ENCODE measurements at regions of chr18 and their contacts with region 1.

Region 1: DNA sequence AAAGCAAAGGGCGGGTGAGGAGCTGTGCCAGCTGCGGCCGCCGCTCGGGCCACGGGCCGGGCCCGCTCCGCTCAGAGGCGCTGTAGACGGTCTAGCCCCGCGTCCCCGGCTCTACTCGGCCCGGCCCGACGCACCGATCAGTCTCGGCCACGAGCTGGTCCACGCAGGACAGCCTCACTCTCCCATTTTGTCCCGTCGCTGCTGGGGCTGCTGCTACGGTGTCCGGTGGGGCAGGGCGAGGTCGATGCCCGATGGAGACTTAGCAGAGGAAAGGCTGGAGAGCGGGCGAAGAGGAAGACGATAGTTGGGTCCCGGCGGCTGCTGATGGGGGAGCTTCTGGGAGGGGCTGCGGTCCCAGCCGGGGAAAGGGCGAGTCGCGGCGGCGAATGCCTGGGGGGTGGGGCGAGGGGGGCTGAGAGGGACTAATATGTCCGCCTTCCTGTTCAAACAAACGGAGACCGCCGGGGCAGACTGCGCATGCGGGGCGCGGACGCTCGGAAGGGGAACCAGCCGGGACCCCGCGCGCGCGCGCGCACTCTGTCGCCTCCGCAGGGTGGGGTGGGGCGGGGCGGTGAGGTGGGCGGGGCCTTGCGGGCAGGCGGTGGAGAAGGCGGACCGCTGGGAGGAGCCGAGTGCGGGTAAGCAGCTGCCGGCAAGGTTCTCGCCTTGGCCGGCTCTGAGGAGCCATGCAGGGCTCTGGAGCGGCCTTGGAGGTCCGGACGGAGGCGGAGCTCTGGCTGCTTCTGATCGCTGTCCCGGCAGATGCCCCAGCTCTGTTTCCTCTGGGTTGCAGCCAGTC is at the start of gene ROCK1:
- H3K4me3 Mint-ChIP-seq: peak within 1 kb of the TSS; percentile 99
- H3K27ac Mint-ChIP-seq: peak within 1 kb of the TSS; percentile 100
- H3K4me1 Mint-ChIP-seq: peaks cover 7% of the 10 kb centered on the region
- H3K27me3 Mint-ChIP-seq: no peaks in the 10 kb centered on the region

Region 2: GRCh38 chr18:21069468-21069867 is 42.1 kb before region 1 on chr18:
- intact Hi-C with region 1: loop called (anchors 5 kb)
- H3K4me3 Mint-ChIP-seq: no peak overlapping the region
- H3K27ac Mint-ChIP-seq: no peak overlapping the region
- H3K4me1 Mint-ChIP-seq: peaks cover 31% of the 10 kb centered on the region
- H3K27me3 Mint-ChIP-seq: no peaks in the 10 kb centered on the region

Region 3: GRCh38 chr18:21163647-21164547 is 52.4 kb after region 1 on chr18:
- intact Hi-C with region 1: loop called (anchors 5 kb)
- H3K4me3 Mint-ChIP-seq: peak overlapping the region; percentile 48
- H3K27ac Mint-ChIP-seq: peak overlapping the region; percentile 91
- H3K4me1 Mint-ChIP-seq: peaks cover 29% of the 10 kb centered on the region
- H3K27me3 Mint-ChIP-seq: no peaks in the 10 kb centered on the region

Region 4: DNA sequence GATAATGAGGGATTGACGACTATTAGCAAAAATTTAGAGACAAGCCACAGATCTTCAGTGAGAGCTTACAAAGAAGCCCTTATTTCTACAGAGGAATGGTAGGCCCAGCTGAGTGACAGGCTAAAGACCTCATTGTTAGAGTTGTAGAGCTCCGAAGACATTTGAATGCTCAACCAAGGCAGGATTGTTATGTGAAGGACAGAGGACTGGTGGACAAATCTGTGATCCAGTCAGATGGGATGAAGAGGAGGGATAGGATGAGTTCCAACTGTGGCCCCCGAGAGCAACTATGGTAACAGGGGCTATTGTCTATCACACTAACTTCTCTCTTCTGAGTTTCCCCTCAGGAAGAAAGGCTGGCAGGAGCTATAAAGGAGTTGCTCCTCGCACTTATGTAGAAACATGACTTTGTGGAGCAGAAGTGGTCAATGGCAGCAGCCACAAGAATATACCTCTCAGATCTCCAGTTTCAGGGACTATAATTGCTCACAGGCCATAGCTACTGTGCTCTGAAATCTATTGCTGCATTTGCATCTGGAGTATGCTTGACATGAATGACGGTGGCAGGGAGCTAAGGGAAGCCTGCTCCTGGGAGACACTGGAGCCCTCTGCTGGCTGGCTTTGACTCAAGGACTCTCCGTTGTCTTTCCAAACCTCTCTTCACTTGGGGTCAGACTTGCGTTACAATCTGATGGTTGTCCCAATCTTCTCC is 80.2 kb after region 1 on chr18:
- intact Hi-C with region 1: no loop called
- H3K4me3 Mint-ChIP-seq: no peak overlapping the region
- H3K27ac Mint-ChIP-seq: no peak overlapping the region
- H3K4me1 Mint-ChIP-seq: no peaks in the 10 kb centered on the region
- H3K27me3 Mint-ChIP-seq: peaks cover 20% of the 10 kb centered on the region

Region 5: GRCh38 chr18:21303913-21304312 is 192.4 kb after region 1 on chr18:
- intact Hi-C with region 1: no loop called
- H3K4me3 Mint-ChIP-seq: no peak overlapping the region
- H3K27ac Mint-ChIP-seq: no peak overlapping the region
- H3K4me1 Mint-ChIP-seq: no peaks in the 10 kb centered on the region
- H3K27me3 Mint-ChIP-seq: no peaks in the 10 kb centered on the region

Region 6: GRCh38 chr18:21612125-21612991 is 500.8 kb after region 1 on chr18 and contains the start of gene SNRPD1:
- intact Hi-C with region 1: loop called (anchors 5 kb)
- H3K4me3 Mint-ChIP-seq: peak within 1 kb of the TSS; percentile 97
- H3K27ac Mint-ChIP-seq: peak within 1 kb of the TSS; percentile 96
- H3K4me1 Mint-ChIP-seq: peaks cover 25% of the 10 kb centered on the region
- H3K27me3 Mint-ChIP-seq: no peaks in the 10 kb centered on the region